Endothelial cell of umbilical vein (primary cell): ENCODE measurements at regions of chr11 and their contacts with region 1.

Region 1: DNA sequence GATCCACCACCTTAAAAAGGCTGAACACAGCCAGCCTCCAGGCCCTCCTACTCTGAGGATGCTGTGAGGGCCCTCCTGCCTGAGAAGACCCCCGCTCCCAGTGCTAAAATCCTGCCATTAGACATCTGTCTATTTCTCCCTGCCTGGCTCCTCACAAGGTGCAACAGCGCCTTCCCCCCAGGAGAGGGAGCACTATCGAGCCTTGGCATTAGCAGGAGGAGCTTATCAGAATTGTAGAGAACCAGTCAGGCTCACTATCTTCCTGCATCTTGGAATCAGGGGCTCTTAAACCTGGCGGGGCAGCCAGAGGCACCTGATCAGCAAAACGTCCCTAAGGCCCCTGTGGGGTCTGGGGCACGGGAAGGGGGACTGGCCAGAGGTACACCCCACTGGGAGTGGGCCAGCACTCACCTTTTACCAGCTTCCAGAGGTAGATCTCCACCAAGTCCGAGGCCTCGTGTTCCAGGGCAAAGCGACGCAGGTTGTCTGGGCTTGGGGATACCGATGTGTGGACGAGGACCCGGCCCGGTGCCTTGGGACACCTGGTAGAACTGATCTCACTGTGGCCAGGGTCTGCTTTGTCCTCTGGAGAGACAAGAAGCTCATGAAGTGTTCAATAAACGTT is 28.7 kb downstream of the CHRDL2 start:
- DNase-seq: peak; percentile 73
- H3K4me3 ChIP-seq: no peak overlapping the region
- H3K27ac ChIP-seq: no peak overlapping the region
- H3K4me1 ChIP-seq: peaks cover 2% of the 10 kb centered on the region
- H3K27me3 ChIP-seq: no peaks in the 10 kb centered on the region
- CTCF ChIP-seq: peak; percentile 92
- POLR2A ChIP-seq: no peak

Region 2: GRCh38 chr11:74559110-74559933 is 143.2 kb before region 1 on chr11:
- CTCF ChIA-PET with region 1: no interaction called
- POLR2A ChIA-PET with region 1: no interaction called
- dilution Hi-C with region 1: no loop called
- intact Hi-C with region 1: no loop called
- DNase-seq: peak; percentile 93
- H3K4me3 ChIP-seq: no peak overlapping the region
- H3K27ac ChIP-seq: peak overlapping the region; percentile 18
- H3K4me1 ChIP-seq: peaks cover 16% of the 10 kb centered on the region
- H3K27me3 ChIP-seq: no peaks in the 10 kb centered on the region
- CTCF ChIP-seq: no peak
- POLR2A ChIP-seq: no peak

Region 3: GRCh38 chr11:74611369-74611861 is 91.1 kb before region 1 on chr11:
- CTCF ChIA-PET with region 1: interaction called, 14 read pairs
- POLR2A ChIA-PET with region 1: no interaction called
- dilution Hi-C with region 1: no loop called
- intact Hi-C with region 1: no loop called
- DNase-seq: peak; percentile 46
- H3K4me3 ChIP-seq: no peak overlapping the region
- H3K27ac ChIP-seq: no peak overlapping the region
- H3K4me1 ChIP-seq: no peaks in the 10 kb centered on the region
- H3K27me3 ChIP-seq: no peaks in the 10 kb centered on the region
- CTCF ChIP-seq: peak in 1 of 2 donors; percentile 26
- POLR2A ChIP-seq: no peak

Region 4: GRCh38 chr11:74634537-74634936 is 68.0 kb before region 1 on chr11:
- CTCF ChIA-PET with region 1: interaction called, 13 read pairs
- POLR2A ChIA-PET with region 1: no interaction called
- dilution Hi-C with region 1: no loop called
- intact Hi-C with region 1: no loop called
- DNase-seq: peak; percentile 23
- H3K4me3 ChIP-seq: no peak overlapping the region
- H3K27ac ChIP-seq: no peak overlapping the region
- H3K4me1 ChIP-seq: peaks cover 12% of the 10 kb centered on the region
- H3K27me3 ChIP-seq: no peaks in the 10 kb centered on the region
- CTCF ChIP-seq: peak in 1 of 2 donors; percentile 13
- POLR2A ChIP-seq: no peak

Region 5: GRCh38 chr11:74720596-74721478 is 18.3 kb after region 1 on chr11:
- CTCF ChIA-PET with region 1: interaction called, 191 read pairs
- POLR2A ChIA-PET with region 1: interaction called, 3 read pairs
- dilution Hi-C with region 1: no loop called
- intact Hi-C with region 1: loop called (anchors 2 kb)
- DNase-seq: no peak
- H3K4me3 ChIP-seq: no peak overlapping the region
- H3K27ac ChIP-seq: no peak overlapping the region
- H3K4me1 ChIP-seq: no peaks in the 10 kb centered on the region
- H3K27me3 ChIP-seq: peaks cover 27 to 32% of the 10 kb centered on the region in 2 experiments
- CTCF ChIP-seq: no peak
- POLR2A ChIP-seq: no peak

Region 6: DNA sequence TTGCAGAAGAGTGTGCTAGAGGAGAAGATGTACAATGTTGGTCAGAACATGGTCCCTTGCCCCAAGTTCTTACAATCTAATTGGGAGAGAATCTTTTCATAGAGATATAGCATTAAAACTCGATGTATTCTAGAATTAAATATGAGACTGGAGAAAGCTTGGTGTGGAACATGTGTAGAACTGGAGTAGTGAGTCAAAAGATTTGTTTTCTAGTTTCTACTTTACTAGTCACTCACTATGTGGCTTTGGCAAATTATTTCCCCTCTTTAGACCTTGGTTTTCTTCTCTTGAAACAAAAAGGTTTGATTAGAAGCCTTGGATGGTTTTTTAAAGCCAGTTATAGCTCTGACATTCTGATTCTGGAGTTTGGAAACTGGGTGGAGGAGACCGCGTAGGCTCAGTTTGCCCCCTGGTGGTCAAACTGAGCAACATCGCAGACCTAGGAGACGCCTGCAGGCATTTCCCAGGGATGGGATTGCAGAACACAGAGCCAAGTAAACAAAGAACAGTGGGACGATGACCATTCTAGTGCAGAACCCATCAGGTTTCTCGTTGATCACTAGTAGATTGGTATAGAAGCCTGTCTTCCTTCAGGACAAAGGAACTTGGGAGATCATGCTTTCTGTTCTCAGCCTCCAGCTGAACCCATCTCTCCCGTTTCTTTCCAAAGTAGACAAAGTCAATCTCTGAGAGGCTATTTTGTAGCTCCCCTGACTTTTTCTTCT is 37.2 kb after region 1 on chr11:
- CTCF ChIA-PET with region 1: interaction called, 112 read pairs
- POLR2A ChIA-PET with region 1: interaction called, 3 read pairs
- dilution Hi-C with region 1: no loop called
- intact Hi-C with region 1: no loop called
- DNase-seq: peak; percentile 64
- H3K4me3 ChIP-seq: no peak overlapping the region
- H3K27ac ChIP-seq: no peak overlapping the region
- H3K4me1 ChIP-seq: no peaks in the 10 kb centered on the region
- H3K27me3 ChIP-seq: peaks cover 11 to 17% of the 10 kb centered on the region in 2 experiments
- CTCF ChIP-seq: peak; percentile 87 to 89
- POLR2A ChIP-seq: no peak

Region 7: GRCh38 chr11:74846770-74847169 is 144.3 kb after region 1 on chr11:
- CTCF ChIA-PET with region 1: interaction called, 11 read pairs
- POLR2A ChIA-PET with region 1: no interaction called
- dilution Hi-C with region 1: loop called (anchors 25 kb)
- intact Hi-C with region 1: no loop called
- DNase-seq: peak; percentile 78
- H3K4me3 ChIP-seq: no peak overlapping the region
- H3K27ac ChIP-seq: no peak overlapping the region
- H3K4me1 ChIP-seq: peaks cover 12% of the 10 kb centered on the region
- H3K27me3 ChIP-seq: no peaks in the 10 kb centered on the region
- CTCF ChIP-seq: peak in 1 of 2 donors; percentile 32
- POLR2A ChIP-seq: no peak

Region 8: GRCh38 chr11:74992852-74993251 is 290.4 kb after region 1 on chr11:
- CTCF ChIA-PET with region 1: no interaction called
- POLR2A ChIA-PET with region 1: no interaction called
- dilution Hi-C with region 1: no loop called
- intact Hi-C with region 1: no loop called
- DNase-seq: no peak
- H3K4me3 ChIP-seq: no peak overlapping the region
- H3K27ac ChIP-seq: no peak overlapping the region
- H3K4me1 ChIP-seq: peaks cover 9% of the 10 kb centered on the region
- H3K27me3 ChIP-seq: no peaks in the 10 kb centered on the region
- CTCF ChIP-seq: no peak
- POLR2A ChIP-seq: no peak